ENCODE measurements at regions of chr9 and their contacts with region 1.

Region 1: DNA sequence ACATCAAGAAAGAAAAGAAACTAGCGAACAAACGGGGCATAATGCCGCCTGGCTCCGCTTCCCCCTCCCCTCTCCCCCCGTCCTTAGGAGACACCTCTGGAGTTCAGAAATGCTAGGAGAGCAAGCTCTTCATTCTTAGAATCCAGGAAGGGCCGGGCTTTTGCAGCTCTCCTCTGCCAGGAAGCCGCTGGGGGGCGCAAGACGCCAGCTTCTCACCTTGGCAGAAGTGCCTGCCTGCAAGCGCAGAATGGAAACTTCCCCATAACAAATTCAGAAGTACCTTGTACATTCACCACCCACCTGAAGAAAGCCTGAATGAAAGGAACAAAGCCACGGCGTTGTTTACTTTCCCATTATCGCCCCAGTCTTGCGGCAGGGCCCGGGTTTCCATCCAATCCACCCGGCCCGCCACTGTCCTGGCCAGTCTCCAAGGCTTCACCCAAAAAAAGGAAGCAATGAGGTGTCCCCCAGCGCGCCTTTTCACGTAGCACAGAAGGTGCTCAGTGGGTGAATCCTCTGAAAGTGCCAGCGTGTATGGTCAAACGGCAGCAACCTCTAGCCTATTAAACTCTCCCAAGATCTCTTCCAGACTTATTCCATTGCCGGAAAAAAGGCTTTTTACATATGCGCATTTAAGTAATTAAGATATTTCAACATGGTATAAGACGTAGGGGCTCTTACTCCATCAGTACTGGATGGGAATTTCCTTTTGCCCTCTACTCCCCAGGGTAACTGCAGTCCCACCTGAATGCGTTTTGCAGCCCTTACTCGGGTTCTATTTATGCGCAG is 1.6 kb upstream of the GADD45G start:
- DNase-seq: peak; percentile 43 to 92
- H3K4me3 ChIP-seq: peak overlapping the region; percentile 81 to 91
- H3K27ac ChIP-seq: peak overlapping the region; percentile 97
- H3K4me1 ChIP-seq: peaks cover 9 to 24% of the 10 kb centered on the region in 2 donors
- H3K27me3 ChIP-seq: no peaks in the 10 kb centered on the region
- CTCF ChIP-seq: peak; percentile 78 to 92 (median 86)

Region 2: DNA sequence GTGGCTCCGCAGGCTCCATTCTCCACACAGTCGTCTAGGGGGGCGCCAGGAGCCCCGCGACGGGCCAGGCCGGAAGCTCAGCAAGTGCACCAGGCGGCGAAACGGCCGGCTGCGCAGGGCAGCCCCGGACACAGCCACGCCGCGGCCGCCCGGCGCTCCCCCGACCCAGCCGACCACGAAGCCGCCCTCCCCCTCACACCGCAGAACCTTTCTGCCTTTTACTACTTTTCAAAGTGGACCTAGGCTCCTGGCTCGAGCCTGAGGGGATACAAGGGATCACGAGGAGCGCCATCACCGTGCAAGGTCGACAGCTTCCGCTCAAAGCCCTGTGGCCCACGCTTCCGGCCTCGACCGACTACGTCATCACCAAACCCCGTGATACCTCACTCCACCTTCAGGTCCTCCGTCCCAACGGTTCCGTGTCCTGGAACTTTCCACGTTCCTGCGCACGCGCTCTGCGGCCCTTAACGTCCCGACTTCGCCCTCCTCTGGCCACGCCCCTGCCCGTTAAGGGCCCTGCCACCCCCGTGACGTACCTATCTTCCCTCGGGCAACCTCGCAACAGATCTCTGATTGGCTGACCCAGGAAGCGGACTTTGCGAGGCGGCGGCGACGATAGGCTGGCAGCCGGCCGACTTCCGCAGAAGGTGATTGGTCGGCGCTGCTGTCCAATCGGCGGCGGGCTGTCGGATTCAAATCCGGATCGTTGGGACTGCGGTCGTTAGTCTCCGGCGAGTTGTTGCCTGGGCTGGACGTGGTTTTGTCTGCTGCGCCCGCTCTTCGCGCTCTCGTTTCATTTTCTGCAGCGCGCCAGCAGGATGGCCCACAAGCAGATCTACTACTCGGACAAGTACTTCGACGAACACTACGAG is 292.5 kb before region 1 on chr9 and contains the start of gene CKS2:
- intact Hi-C with region 1: no loop called
- DNase-seq: peak; percentile 99 to 100
- H3K4me3 ChIP-seq: peak within 1 kb of the TSS; percentile 91
- H3K27ac ChIP-seq: peak within 1 kb of the TSS; percentile 100
- H3K4me1 ChIP-seq: peaks cover 3 to 11% of the 10 kb centered on the region in 2 donors
- H3K27me3 ChIP-seq: no peaks in the 10 kb centered on the region
- CTCF ChIP-seq: no peak
- total RNA-seq, gene CKS2: not detected

Region 3: DNA sequence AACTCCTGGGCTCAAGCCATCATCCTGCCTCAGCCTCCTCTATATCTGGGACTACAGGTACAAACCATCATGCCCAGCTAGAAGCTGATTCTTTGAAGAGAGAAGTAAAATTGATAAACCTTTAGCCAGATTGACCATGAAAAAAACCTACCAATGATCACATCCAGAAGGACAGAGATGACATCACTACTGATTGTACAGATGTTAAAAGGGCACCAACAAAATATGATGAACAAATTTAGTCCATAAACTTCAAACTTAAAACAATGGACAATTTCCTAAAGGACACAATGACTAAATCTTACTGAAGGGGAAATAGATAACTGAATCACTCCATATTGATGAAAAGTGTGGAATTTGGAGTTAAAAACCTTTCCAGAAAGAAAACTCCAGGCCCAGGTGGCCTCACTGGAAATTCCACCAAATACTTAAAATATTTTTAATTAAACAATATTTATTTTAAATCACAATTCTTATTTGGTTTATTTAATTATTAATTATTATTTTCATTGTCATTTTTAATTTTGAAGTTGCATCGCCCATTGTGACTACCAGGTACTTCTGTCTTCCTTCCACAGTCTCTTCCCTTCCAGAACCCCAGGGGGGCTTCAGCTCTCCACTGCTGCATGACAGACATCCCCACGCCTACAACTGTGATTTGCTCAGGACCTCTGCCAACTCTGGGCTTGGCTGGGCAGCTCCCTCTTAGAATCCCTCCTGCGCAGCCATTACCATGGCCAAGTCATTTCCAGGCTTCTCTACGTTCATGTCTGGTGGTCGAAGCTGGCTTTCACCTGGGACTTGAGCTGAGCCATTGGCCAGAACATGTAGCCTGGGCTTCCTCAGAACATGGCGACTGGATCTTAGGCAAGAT is 14.9 kb before region 1 on chr9:
- intact Hi-C with region 1: no loop called
- DNase-seq: no peak
- H3K4me3 ChIP-seq: no peak overlapping the region
- H3K27ac ChIP-seq: no peak overlapping the region
- H3K4me1 ChIP-seq: no peaks in the 10 kb centered on the region
- H3K27me3 ChIP-seq: no peaks in the 10 kb centered on the region
- CTCF ChIP-seq: no peak

Region 4: DNA sequence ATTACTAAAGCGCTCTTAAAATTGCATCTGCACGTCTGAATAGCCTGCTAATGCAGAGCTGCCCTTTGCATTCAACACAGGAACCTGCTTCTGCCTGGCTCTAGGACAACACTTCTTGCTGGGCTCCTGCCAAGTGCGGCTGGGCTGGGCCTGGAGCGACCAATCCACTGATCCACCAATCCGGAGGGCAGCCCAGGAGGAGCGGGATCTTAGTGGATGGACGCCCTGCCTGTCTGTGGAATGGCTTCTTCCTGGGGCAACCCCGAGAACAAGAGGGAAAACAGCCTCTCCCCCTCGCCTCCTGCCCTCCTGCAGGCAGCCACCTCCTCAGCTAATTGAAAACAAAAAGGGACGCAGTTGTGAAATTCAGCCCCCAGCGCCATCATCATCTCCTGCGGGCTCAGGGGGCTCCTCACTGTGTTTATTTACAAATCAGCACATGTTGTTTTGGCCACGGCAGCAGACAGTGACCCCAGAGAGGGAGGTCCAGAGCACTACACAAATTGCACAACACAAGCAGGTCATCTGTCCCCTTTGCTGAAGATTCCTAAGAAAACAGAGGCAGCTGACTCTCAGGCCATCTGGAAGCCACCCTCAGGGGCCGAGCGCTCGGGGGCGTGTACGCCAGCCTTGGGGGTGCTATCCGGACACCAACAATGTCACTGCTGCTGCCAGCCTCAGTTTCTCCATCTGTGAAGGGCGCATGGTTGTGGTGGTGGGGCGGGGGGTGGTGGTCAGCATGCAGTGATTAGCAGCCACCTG is 59.0 kb after region 1 on chr9:
- intact Hi-C with region 1: loop called (anchors 1 kb)
- DNase-seq: peak; percentile 85 to 97
- H3K4me3 ChIP-seq: peak overlapping the region; percentile 32 to 64
- H3K27ac ChIP-seq: peak overlapping the region in 1 of 2 donors; percentile 38
- H3K4me1 ChIP-seq: peaks cover 4 to 11% of the 10 kb centered on the region in 2 donors
- H3K27me3 ChIP-seq: no peaks in the 10 kb centered on the region
- CTCF ChIP-seq: no peak

Region 5: DNA sequence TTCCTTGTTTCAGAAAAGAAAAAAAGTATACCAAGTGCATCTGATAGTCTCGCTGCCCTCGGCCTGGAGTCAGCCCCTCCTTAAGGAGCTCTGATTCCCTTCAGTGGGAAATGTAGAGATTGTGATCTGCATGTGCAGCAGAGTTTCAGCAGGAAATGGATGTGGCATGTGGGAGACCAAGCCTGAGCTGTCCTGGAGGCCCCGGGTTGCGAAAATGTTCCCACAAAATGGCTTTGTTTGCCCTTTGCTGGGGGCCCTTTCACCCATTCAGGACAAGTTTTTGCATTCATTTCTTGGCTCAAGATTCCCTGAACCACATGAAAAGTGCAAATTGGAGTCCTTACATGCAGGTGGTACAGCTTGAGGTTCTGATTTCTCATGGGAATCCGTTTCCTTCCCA is 232.5 kb after region 1 on chr9:
- intact Hi-C with region 1: no loop called
- DNase-seq: peak in 1 of 2 donors; percentile 19
- H3K4me3 ChIP-seq: no peak overlapping the region
- H3K27ac ChIP-seq: no peak overlapping the region
- H3K4me1 ChIP-seq: no peaks in the 10 kb centered on the region
- H3K27me3 ChIP-seq: no peaks in the 10 kb centered on the region
- CTCF ChIP-seq: no peak

Region 6: GRCh38 chr9:89941875-89942274 is 338.7 kb after region 1 on chr9:
- intact Hi-C with region 1: loop called (anchors 5 kb)
- DNase-seq: no peak
- H3K4me3 ChIP-seq: no peak overlapping the region
- H3K27ac ChIP-seq: peak overlapping the region in 1 of 2 donors; percentile 57
- H3K4me1 ChIP-seq: peaks cover 0 to 14% of the 10 kb centered on the region in 2 donors
- H3K27me3 ChIP-seq: no peaks in the 10 kb centered on the region
- CTCF ChIP-seq: no peak

Region 7: GRCh38 chr9:90102292-90102901 is 499.2 kb after region 1 on chr9:
- intact Hi-C with region 1: loop called (anchors 1 kb)
- DNase-seq: peak; percentile 48 to 87
- H3K4me3 ChIP-seq: no peak overlapping the region
- H3K27ac ChIP-seq: no peak overlapping the region
- H3K4me1 ChIP-seq: peaks cover 0 to 3% of the 10 kb centered on the region in 2 donors
- H3K27me3 ChIP-seq: no peaks in the 10 kb centered on the region
- CTCF ChIP-seq: peak; percentile 79 to 86 (median 83)

Region 8: DNA sequence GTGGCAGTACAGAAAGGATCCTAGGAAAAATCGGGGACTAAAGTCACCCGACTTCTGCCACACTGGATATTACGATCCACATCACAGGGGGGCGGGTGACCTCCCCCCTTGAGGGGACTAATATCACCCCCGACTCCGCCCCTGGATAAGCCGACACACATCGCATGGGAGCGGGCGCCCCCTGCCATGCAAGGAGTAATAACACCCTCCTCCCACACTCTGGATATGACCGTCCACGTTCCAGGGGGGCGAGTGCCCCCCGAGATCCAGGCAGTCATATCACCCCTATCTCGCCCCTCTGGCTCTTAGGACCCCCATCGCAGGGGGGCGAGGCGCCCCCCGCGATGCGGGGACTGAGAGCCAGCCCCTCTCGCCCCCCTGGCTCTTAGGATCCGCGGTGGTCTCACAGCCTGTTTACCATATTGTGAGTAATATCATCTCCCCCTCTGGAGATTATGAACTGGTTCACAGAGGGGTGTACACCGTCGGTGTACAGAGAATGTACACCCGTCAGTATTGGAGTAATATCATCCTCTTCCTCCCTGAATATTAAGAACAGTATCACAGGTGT is 616.5 kb after region 1 on chr9:
- intact Hi-C with region 1: no loop called
- DNase-seq: no peak
- H3K4me3 ChIP-seq: no peak overlapping the region
- H3K27ac ChIP-seq: no peak overlapping the region
- H3K4me1 ChIP-seq: no peaks in the 10 kb centered on the region
- H3K27me3 ChIP-seq: no peaks in the 10 kb centered on the region
- CTCF ChIP-seq: peak in 1 of 3 experiments; percentile 9